Endothelial cell of umbilical vein (primary cell): ENCODE measurements at regions of chr1 and their contacts with region 1.

Region 1: GRCh38 chr1:116325922-116326321 is 47.1 kb upstream of the ATP1A1 start:
- DNase-seq: no peak
- H3K4me3 ChIP-seq: no peak overlapping the region
- H3K27ac ChIP-seq: no peak overlapping the region
- H3K4me1 ChIP-seq: peaks cover 6% of the 10 kb centered on the region
- H3K27me3 ChIP-seq: no peaks in the 10 kb centered on the region
- CTCF ChIP-seq: no peak
- POLR2A ChIP-seq: no peak

Region 2: DNA sequence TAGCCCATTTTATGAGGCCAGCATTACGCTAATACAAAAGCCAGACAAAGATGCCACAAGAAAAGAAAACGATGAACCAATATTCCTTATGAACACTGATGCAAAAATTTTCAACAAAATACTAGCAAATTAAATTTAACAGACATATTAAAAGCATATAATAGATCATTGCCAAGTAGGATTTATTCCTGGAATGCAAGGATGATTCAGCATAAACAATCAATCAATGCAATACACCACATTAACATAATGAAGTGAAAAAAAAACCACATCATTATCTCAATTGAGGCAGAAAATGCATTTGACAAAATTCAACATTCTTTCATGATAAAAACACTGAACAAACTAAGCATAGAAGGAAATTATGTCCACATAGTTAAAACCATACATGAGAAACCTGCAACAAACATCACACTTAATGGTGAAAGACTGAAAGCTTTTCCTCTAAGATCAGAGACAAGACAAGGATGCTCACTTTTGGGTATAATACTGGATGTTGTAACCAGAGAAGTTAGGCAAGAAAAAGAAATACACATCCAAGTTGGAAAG is 24.2 kb after region 1 on chr1:
- CTCF ChIA-PET with region 1: no interaction called
- POLR2A ChIA-PET with region 1: no interaction called
- dilution Hi-C with region 1: no loop called
- intact Hi-C with region 1: loop called (anchors 2 kb)
- DNase-seq: no peak
- H3K4me3 ChIP-seq: no peak overlapping the region
- H3K27ac ChIP-seq: no peak overlapping the region
- H3K4me1 ChIP-seq: no peaks in the 10 kb centered on the region
- H3K27me3 ChIP-seq: no peaks in the 10 kb centered on the region
- CTCF ChIP-seq: no peak
- POLR2A ChIP-seq: no peak